H1 (cell line): ENCODE measurements at regions of chr1 and their contacts with region 1.

Region 1: DNA sequence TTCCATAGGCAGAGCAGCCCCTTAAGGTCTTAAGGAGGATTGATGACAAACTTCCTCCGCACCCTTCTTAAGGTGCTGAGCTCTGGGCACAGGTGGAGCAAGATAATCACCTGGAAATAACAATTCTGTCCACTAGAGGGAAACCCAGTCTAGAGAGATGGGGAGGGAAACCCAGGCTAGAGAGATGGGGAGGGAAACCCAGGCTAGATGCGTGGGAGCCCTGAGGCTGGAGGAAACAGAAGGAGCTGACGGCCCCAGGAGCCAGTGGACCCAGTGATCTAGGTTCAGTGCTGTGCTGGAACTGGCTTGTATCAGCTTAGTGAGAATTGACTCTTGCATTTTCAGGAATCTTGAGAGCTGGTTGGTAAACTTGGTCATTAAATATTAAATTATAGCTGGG is 17.8 kb upstream of the MYCL start:
- DNase-seq: peak in 1 of 2 experiments; percentile 60
- H3K4me3 ChIP-seq: no peak overlapping the region
- H3K27ac ChIP-seq: no peak overlapping the region
- H3K4me1 ChIP-seq: peaks cover 7 to 12% (median 10%) of the 10 kb centered on the region in 4 experiments
- H3K27me3 ChIP-seq: peaks cover 0 to 5% (median under 1%) of the 10 kb centered on the region in 4 experiments; a peak in 3 of 7 replicates
- CTCF ChIP-seq: peak; percentile 21 to 89 (median 81)
- EP300 ChIP-seq: no peak
- POLR2A ChIP-seq: no peak
- RAD21 ChIP-seq: peak; percentile 91 to 96

Region 2: DNA sequence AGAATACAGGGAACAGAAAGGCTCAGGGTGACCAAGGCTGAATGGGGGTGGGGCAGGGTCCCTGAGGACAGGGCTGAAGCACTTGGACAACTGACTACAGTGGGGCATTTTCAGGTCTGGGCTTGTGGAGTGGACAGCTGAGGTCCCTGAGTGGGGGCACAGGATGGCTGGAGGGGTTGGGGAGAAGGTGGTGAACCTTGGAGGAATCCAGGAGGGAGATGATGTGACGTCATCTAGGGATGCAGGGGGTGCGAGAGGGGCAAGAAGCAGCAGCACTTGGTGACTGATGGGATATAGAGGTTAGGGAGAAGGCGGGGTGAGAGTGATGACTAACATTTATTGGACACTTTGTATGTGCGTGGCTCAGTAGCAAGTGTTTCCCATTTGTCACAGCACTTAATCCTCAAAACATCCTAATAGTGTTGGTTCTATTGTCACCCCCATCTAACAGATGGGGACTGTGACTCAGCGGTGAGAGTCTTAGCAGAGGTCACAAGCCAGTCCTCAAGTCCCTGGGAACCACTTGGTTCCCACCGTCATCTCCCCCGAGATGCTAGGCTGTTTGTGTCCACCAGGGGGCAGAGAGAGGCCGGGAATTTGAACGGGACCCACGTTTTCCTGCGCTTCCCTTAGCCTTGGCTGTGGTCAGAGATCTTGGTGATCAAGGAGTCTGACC is 103.0 kb before region 1 on chr1:
- CTCF ChIA-PET with region 1: interaction called, 79 read pairs
- POLR2A ChIA-PET with region 1: no interaction called
- DNase-seq: peak; percentile 43 to 92
- H3K4me3 ChIP-seq: no peak overlapping the region
- H3K27ac ChIP-seq: no peak overlapping the region
- H3K4me1 ChIP-seq: no peaks in the 10 kb centered on the region
- H3K27me3 ChIP-seq: no peaks in the 10 kb centered on the region; a peak in 1 of 7 replicates
- CTCF ChIP-seq: peak; percentile 81 to 85 (median 82)
- EP300 ChIP-seq: no peak
- POLR2A ChIP-seq: no peak
- RAD21 ChIP-seq: peak; percentile 86 to 89

Region 3: DNA sequence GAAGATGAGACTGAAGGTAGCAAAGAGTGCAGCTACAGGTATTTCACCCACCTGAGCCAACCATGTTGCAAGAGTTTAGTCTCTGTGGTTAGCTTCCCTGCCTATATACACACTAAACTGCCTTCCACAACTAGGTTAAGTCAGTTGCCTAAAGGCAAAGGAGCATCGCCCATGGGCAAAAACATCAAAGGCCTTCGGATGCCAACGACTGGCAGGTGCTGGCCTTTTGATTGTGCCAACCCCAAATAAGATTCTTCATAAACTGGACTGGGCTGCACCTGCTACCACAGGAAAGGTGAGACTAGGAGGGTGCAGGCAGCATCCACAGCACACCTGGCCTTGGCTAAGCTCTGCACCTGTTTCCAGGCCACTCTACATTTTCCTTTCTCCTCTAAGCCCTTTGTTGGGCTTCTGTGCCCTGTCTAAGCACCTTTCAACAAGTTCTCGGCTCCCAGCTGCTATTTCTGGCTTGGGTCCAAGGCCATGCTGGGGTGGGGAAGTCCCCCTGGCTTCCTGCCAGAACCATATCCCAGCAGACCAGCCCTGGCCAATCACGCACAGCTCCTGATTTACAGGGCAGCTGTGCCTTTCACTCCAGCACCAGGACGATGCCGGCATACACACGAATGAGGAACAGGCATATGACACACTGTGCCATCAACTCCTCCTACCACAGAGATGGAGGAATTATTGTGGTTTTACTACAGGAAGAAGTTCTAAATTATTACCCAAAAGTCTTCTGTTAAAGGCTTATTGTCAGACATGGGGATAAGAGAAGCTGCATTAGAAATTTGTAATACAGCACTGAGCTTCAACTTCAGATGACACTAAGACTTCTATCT is 74.0 kb before region 1 on chr1:
- CTCF ChIA-PET with region 1: interaction called, 13 read pairs
- POLR2A ChIA-PET with region 1: no interaction called
- DNase-seq: no peak
- H3K4me3 ChIP-seq: no peak overlapping the region
- H3K27ac ChIP-seq: no peak overlapping the region
- H3K4me1 ChIP-seq: no peaks in the 10 kb centered on the region
- H3K27me3 ChIP-seq: no peaks in the 10 kb centered on the region
- CTCF ChIP-seq: no peak
- EP300 ChIP-seq: no peak
- POLR2A ChIP-seq: no peak
- RAD21 ChIP-seq: no peak

Region 4: GRCh38 chr1:39933956-39934941 is 14.7 kb after region 1 on chr1:
- CTCF ChIA-PET with region 1: interaction called, 39 read pairs
- POLR2A ChIA-PET with region 1: interaction called, 10 read pairs
- DNase-seq: no peak
- H3K4me3 ChIP-seq: no peak overlapping the region
- H3K27ac ChIP-seq: no peak overlapping the region
- H3K4me1 ChIP-seq: no peaks in the 10 kb centered on the region
- H3K27me3 ChIP-seq: no peaks in the 10 kb centered on the region
- CTCF ChIP-seq: no peak
- EP300 ChIP-seq: no peak
- POLR2A ChIP-seq: no peak
- RAD21 ChIP-seq: no peak

Region 5: GRCh38 chr1:39954816-39955546 is 35.4 kb after region 1 on chr1 and contains the start of gene MFSD2A:
- CTCF ChIA-PET with region 1: interaction called, 77 read pairs
- POLR2A ChIA-PET with region 1: interaction called, 4 read pairs
- DNase-seq: peak; percentile 69 to 95
- H3K4me3 ChIP-seq: peak within 1 kb of the TSS; percentile 50 to 78 (median 69)
- H3K27ac ChIP-seq: no peak within 1 kb of the TSS
- H3K4me1 ChIP-seq: peaks cover under 1 to 9% (median 7%) of the 10 kb centered on the region in 4 experiments
- H3K27me3 ChIP-seq: peaks cover 0 to 16% (median 12%) of the 10 kb centered on the region in 4 experiments; a peak in 5 of 7 replicates
- CTCF ChIP-seq: no peak
- EP300 ChIP-seq: no peak
- POLR2A ChIP-seq: peak; percentile 84 to 89
- RAD21 ChIP-seq: no peak
- total RNA-seq, gene MFSD2A: 25.9 and 26.6 TPM in 2 replicates

Region 6: DNA sequence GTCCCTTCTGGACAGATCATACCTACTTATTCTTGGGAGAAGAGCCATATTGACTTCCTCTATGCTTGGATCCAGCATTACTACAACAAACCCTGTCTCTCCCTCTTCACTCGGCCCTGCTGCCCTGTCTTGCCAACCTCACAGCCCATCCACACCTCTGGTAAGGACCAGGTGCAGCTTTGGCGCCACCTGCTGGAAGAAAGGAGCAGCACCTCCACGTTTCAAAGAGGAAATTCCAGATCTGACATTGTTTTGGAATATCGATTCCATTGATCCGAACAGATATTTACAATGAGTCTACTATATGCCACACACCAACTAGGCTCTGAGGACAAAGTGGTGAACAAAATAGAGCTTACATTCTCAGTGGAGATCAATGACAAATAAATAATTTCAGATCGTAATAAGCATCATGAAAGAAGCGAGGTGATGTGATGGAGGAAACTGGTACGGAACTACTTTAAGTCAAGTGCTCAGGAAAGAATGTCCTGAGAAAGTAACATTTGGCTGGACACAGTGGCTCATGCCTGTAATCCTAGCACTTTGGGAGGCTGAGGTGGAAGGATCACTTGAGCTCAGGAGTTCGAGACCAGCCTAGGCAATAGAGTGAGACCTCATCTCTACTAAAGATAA is 54.1 kb after region 1 on chr1:
- CTCF ChIA-PET with region 1: interaction called, 263 read pairs
- POLR2A ChIA-PET with region 1: interaction called, 13 read pairs
- DNase-seq: peak; percentile 38 to 85
- H3K4me3 ChIP-seq: no peak overlapping the region
- H3K27ac ChIP-seq: no peak overlapping the region
- H3K4me1 ChIP-seq: peaks cover 0 to 3% (median 0%) of the 10 kb centered on the region in 4 experiments; a peak in 2 of 7 replicates
- H3K27me3 ChIP-seq: no peaks in the 10 kb centered on the region
- CTCF ChIP-seq: peak; percentile 89 to 98 (median 96)
- EP300 ChIP-seq: no peak
- POLR2A ChIP-seq: no peak
- RAD21 ChIP-seq: peak; percentile 98 to 99

Region 7: GRCh38 chr1:40032240-40032891 is 112.8 kb after region 1 on chr1:
- CTCF ChIA-PET with region 1: interaction called, 134 read pairs
- POLR2A ChIA-PET with region 1: interaction called, 3 read pairs
- DNase-seq: no peak
- H3K4me3 ChIP-seq: no peak overlapping the region
- H3K27ac ChIP-seq: no peak overlapping the region
- H3K4me1 ChIP-seq: no peaks in the 10 kb centered on the region
- H3K27me3 ChIP-seq: no peaks in the 10 kb centered on the region
- CTCF ChIP-seq: peak in 2 of 3 experiments; percentile 67 to 73; a peak in 3 of 4 replicates
- EP300 ChIP-seq: no peak
- POLR2A ChIP-seq: no peak
- RAD21 ChIP-seq: peak; percentile 71 to 76